Posterior vena cava (tissue), 2 donors: ENCODE measurements at regions of chr15 and their contacts with region 1.

Region 1: GRCh38 chr15:33448961-33449606 is 138.3 kb downstream of the RYR3 start:
- DNase-seq: no peak

Region 2: GRCh38 chr15:33430577-33430976 is 18.5 kb before region 1 on chr15:
- intact Hi-C with region 1: loop called in 1 of 2 experiments (anchors 1 kb)
- DNase-seq: no peak